ENCODE measurements at regions of chr3 and their contacts with region 1.

Region 1: DNA sequence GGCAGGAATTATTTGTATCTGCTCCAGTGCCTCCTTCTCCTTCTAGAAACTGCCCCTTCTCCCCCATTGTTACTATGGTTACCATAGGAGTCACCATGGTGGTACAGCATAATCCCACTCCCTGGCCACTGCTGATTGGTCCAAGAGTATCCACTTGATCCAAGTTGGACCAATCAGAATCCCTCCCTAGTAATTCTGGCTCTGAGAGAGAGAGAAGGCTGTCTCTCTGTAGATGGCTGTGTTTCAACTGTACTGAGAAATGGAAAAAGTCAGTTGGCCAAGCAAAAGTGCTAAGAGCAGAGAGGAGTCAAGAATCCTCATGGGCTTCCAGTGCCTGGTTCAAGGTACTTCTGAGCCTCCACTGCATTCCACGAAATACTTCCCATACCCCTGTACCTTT is 120.6 kb upstream of the SPATA12 start:
- DNase-seq: no peak
- H3K4me3 ChIP-seq: no peak overlapping the region
- H3K27ac ChIP-seq: no peak overlapping the region
- H3K4me1 ChIP-seq: peaks cover 40% of the 10 kb centered on the region
- CTCF ChIP-seq: no peak

Region 2: DNA sequence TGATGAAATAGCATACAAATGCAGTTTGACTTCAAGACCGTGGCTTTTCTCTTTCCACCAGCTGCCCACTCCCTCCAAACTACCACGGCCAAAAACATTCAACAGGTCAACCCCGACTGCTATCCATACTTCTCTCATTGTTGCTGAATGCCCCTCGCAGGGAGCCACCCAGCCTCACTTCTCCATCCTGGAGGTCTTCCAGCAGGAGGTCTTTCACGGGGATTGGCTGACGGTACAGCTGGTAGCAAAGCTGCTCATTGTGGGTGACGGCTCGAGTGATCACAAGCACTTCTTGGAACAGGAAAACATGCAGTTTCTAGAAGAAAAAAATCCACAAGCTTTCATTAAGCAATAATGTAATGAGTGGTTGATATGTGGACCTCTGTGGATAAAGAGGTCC is 207.7 kb before region 1 on chr3:
- CTCF ChIA-PET with region 1: no interaction called
- POLR2A ChIA-PET with region 1: no interaction called
- intact Hi-C with region 1: no loop called
- DNase-seq: no peak
- H3K4me3 ChIP-seq: no peak overlapping the region
- H3K27ac ChIP-seq: no peak overlapping the region
- H3K4me1 ChIP-seq: no peaks in the 10 kb centered on the region
- CTCF ChIP-seq: no peak

Region 3: GRCh38 chr3:56855856-56856512 is 83.8 kb before region 1 on chr3:
- CTCF ChIA-PET with region 1: no interaction called
- POLR2A ChIA-PET with region 1: no interaction called
- intact Hi-C with region 1: no loop called
- DNase-seq: peak; percentile 57
- H3K4me3 ChIP-seq: no peak overlapping the region
- H3K27ac ChIP-seq: no peak overlapping the region
- H3K4me1 ChIP-seq: peaks cover 24% of the 10 kb centered on the region
- CTCF ChIP-seq: peak; percentile 94

Region 4: DNA sequence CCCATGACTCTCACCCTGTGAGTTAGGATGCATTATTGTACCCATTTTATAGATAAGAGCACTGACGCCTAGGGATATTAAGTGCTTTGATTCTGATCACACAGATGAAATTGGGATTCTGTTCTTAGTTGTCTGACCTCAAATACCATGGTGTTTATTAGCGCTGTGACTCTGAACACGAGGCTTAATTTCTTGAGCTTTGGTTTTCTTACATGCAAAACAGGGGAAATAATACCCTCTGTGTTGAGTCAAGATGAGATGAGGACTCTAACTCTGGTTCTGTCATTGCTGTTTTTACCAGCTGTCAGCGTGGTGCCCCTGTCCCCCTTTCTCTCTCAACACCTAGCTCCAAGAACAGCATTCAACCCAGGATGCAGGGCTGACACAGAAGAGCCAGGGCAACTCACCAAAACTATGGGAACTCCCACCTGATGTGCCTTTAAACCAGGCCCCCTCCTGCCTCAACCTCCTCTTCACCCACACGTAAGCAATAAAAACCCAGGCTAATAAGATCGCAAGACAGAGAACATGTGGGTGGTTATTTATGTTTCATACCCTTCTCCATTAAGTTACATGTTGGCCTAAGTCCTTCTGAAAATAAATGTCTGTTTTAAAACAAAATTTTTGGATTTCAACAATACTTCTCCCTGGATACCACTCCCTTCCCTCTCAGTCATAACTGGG is 20.5 kb after region 1 on chr3:
- CTCF ChIA-PET with region 1: interaction called, 4 read pairs
- POLR2A ChIA-PET with region 1: interaction called, 20 read pairs
- intact Hi-C with region 1: no loop called
- DNase-seq: no peak
- H3K4me3 ChIP-seq: no peak overlapping the region
- H3K27ac ChIP-seq: peak overlapping the region; percentile 6
- H3K4me1 ChIP-seq: peaks cover 76% of the 10 kb centered on the region
- CTCF ChIP-seq: no peak